ENCODE measurements at regions of chr14 and their contacts with region 1.

Region 1: DNA sequence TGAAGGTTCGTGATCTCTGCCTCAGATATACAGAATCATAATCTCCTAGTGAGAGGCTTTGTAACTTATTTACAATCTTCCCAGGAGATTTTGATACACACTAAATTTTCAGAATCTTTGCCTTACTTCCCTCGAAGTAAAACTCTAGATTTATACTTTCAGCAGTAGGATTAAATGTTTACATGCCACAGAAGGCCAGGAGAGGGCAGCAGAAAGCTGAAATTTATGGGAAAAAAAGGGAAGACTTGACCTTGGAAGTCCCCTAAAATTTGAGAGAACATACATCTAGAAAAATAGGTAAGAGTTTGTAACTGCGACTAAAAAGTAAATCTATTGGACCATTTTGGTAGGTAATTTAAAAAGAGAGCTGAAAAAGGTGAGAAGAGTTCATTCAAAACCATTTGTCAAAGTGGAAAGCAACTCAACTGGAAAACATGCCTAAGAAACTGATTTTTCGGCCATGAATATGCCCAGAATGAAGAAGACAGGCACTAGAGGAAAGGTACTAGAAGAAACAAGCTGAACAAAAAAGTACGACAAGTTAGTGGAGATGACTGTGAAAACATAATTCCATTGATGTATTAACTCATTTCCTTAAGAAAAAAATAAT is 242.0 kb upstream of the MDGA2 start:
- DNase-seq: peak; percentile 58
- H3K4me3 ChIP-seq: no peak overlapping the region
- H3K27ac ChIP-seq: no peak overlapping the region
- H3K4me1 ChIP-seq: no peaks in the 10 kb centered on the region
- H3K27me3 ChIP-seq: no peaks in the 10 kb centered on the region
- CTCF ChIP-seq: peak; percentile 70

Region 2: DNA sequence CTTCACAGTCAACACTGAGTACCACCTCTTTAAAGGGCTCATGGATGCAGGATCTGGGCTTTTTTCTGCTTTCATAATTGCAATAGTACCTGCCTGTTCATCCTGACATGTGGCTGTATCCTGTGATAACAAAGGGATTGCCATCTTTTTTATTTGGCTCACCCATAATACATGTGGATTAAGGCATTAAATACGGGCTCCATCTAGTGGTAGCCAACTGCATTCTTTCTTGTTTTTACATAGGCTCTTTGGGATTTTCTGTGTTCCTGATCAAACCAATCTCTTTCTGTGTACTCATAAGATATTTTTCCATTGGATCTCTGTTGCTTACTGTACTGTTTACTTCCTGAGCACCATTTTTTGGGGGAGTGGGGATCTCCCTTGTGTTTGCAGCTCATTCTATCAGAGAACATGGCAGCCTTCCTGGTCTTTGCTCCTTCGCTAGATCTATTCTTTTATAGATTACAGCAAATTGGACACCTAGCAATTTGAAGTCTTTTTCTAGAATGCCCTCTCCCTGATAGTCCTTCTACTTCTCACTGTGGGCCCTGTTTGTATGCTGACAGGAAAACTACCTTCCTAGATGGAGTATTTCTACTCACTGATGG is 481.3 kb after region 1 on chr14:
- CTCF ChIA-PET with region 1: no interaction called
- POLR2A ChIA-PET with region 1: no interaction called
- intact Hi-C with region 1: loop called (anchors 2 kb)
- DNase-seq: peak; percentile 62
- H3K4me3 ChIP-seq: no peak overlapping the region
- H3K27ac ChIP-seq: no peak overlapping the region
- H3K4me1 ChIP-seq: no peaks in the 10 kb centered on the region
- H3K27me3 ChIP-seq: no peaks in the 10 kb centered on the region
- CTCF ChIP-seq: peak; percentile 78

Region 3: GRCh38 chr14:48814562-48814961 is 897.1 kb after region 1 on chr14:
- CTCF ChIA-PET with region 1: no interaction called
- POLR2A ChIA-PET with region 1: no interaction called
- intact Hi-C with region 1: loop called (anchors 10 kb)
- DNase-seq: peak; percentile 21
- H3K4me3 ChIP-seq: no peak overlapping the region
- H3K27ac ChIP-seq: no peak overlapping the region
- H3K4me1 ChIP-seq: no peaks in the 10 kb centered on the region
- H3K27me3 ChIP-seq: no peaks in the 10 kb centered on the region
- CTCF ChIP-seq: peak; percentile 41; the same call in 1 of the 2 replicates

Region 4: DNA sequence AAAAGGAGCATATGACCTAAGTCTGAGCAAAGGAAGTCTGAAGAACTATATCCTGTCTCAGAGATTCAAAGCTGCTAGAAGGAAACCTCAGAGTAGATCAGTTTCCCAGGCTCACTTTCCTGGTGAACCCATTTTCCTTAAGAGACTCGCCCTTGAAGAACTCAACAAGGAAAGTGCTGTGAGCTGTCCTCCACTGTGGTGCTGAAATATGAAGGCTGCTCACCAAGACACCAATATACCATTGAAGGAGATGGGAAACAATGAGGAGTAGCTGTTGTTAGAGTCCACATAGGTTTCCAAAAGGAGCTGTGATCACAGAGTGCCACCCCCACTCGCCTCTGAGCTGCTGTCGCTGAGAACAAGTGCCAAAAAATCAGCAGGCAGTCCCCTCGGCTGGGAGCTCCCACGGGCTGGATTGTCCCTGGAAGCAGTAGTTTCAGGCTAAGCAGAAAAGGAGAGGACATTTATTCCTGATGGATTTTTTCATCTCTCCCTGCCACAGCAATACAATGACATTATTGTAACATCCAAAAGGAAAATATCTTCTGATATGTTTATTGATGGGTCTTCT is 1386.6 kb after region 1 on chr14:
- CTCF ChIA-PET with region 1: no interaction called
- POLR2A ChIA-PET with region 1: no interaction called
- intact Hi-C with region 1: loop called (anchors 1 kb)
- DNase-seq: peak; percentile 70
- H3K4me3 ChIP-seq: no peak overlapping the region
- H3K27ac ChIP-seq: no peak overlapping the region
- H3K4me1 ChIP-seq: no peaks in the 10 kb centered on the region
- H3K27me3 ChIP-seq: no peaks in the 10 kb centered on the region
- CTCF ChIP-seq: no peak

Measured in A673 (cell line).